ENCODE measurements at regions of chr4 and their contacts with region 1.

Region 1: DNA sequence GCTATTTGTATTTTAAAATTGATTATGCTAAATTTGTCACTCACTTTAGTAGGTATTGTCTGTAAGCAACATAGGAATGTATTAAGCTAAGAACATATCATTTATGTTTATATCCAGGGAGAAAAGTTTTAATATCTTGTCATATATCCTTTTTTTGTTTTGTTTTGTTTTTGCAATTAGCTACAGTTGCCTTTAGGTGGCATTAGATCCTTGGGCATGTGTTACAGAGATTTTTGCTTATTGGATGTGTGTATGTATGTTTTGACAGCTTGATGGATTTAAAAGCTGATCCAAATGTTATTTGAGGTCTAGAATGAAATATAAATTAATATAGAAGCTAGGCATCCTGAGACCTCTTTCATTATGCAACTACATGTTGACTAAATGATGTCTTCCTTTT is 36.1 kb upstream of the OTUD4 start:
- H3K4me3 ChIP-seq: no peak overlapping the region
- H3K27ac ChIP-seq: no peak overlapping the region
- H3K4me1 ChIP-seq: no peaks in the 10 kb centered on the region
- CTCF ChIP-seq: 0 out of 2 replicates have a peak, but pooled peaks have one; percentile 31

Region 2: GRCh38 chr4:144318797-144319196 is 897.7 kb before region 1 on chr4:
- CTCF ChIA-PET with region 1: no interaction called
- POLR2A ChIA-PET with region 1: no interaction called
- H3K4me3 ChIP-seq: no peak overlapping the region
- H3K27ac ChIP-seq: no peak overlapping the region
- H3K4me1 ChIP-seq: no peaks in the 10 kb centered on the region
- CTCF ChIP-seq: no peak

Region 3: DNA sequence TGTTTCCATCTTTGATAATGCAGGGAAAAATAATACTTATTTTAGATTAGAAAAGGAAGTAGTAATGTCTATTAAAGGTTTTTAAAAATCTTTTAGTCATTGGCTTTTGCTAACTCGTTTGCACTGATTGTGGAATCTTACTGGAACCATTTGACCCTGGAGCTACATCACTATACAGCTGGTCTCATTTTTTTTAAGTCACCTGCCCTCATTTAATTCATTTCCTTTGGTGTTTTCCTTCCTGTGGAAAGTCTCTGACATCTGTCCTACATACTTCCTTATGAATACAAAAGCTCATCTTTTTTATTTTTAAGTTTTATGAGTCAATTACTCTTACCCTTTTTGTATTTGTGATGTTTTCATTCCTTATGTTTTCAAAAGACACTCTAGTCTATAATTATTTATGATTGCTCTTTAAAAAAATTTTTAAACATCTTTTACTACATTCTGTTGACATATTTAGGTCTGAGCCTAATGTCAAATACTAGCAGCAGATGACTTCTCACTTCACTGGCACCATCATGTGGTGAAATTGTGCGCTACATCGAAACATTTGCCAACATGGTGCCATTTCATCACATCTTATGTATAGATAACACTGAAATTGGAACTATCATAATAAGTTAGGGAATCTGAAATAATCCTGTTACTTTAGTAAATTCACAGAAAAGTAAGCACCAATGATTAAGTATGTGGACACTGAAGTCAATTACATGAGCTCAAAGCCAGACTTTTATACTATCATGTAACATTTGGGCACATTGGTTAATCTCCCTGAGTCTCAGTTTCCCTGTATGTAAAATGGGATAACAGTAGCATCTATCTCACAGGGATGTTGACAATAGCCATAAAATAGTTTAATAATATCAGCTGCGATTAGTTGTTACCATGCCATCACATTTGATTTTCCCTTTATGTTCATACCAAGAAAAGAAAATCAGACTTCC is 393.2 kb after region 1 on chr4:
- CTCF ChIA-PET with region 1: interaction called, 11 read pairs
- POLR2A ChIA-PET with region 1: no interaction called
- H3K4me3 ChIP-seq: no peak overlapping the region
- H3K27ac ChIP-seq: no peak overlapping the region
- H3K4me1 ChIP-seq: no peaks in the 10 kb centered on the region
- CTCF ChIP-seq: no peak

Measured in HEK293 (cell line).